Cardiac septum (tissue), 1 donor: ENCODE measurements at regions of chr5 and their contacts with region 1.

Region 1: GRCh38 chr5:171342362-171343111 is 33.5 kb downstream of the TLX3 start:
- DNase-seq: no peak

Region 2: DNA sequence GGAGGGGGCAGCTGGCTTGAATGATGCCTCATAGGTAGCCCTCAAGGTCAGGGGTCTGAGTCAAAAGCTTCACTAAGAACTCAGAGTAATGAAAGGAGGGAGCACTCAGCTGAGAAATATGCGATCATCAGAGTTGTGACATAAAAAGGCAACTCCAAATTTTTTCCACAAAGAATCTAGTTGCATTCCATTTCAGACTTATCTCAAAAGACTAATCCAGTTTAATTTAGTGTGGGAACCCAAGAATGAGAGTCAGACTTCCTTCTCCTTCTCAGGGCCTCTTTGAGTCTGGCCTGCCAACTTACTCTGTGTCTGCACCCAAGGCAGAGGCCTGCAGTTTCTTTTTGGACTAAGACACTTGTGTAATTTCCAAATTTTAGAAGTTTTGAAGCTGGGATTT is 524.3 kb before region 1 on chr5:
- intact Hi-C with region 1: loop called (anchors 10 kb)
- DNase-seq: no peak

Region 3: DNA sequence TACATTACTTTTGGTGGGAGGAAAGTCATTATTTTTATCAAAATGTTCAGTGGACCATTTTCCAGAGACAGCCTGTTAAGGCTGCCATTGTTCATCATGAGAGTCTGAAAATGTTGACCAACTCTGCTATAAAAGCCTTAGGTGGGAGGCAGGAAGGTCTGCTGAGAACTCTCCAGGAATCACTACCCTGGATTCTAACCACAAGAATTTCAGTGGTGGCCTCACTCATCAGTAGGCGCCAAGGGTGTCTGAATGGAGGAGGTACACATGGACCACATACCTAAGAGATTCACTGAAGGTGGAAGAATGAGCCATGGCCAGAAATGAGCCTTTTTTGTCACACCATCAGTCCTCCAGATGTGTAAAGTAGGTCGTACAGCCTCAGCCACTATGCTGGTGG is 54.5 kb before region 1 on chr5:
- intact Hi-C with region 1: no loop called
- DNase-seq: no peak